HEK293 (cell line): ENCODE measurements at regions of chr6 and their contacts with region 1.

Region 1: DNA sequence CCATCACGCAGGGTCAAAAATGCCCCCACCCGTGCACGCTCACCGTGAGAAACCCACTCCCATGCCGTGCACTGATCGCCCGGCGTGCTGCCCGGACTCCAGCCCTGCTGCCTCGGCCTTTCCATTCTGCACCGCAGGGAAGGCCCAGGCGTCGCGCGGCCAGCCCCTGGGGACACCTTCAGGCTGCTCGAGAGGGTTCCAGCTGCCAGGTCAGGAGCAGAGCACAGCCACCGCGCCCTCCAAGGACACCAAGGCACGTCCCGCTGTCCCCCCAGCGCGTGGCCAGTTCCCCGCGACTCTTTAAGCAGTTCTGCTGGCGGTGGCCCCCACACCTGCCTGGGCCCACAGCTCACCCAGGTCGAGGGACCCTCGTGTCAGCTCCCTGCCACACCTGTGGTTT is 314.3 kb upstream of the QKI start:
- H3K4me3 ChIP-seq: no peak overlapping the region
- H3K27ac ChIP-seq: no peak overlapping the region
- H3K4me1 ChIP-seq: no peaks in the 10 kb centered on the region
- CTCF ChIP-seq: no peak

Region 2: DNA sequence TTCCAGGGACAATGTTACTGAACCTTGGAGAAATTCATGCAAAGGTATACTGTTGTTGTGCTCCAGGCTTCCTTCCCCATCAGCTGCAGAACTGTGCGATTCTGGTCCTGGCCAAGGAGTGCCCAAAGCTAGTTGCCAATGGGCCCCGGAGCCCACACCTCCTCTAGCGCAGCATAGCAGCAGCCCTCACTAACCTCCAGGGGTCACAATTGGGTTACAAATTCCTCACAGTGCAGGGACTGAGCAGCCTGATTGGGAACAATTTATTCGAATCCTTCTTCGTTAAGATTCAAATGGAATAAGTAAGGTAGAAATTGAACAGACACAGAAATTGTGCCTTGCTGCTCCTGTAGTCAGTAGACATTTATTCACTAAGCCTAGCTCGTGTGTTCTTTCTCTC is 657.6 kb before region 1 on chr6:
- CTCF ChIA-PET with region 1: interaction called, 13 read pairs
- POLR2A ChIA-PET with region 1: no interaction called
- H3K4me3 ChIP-seq: no peak overlapping the region
- H3K27ac ChIP-seq: no peak overlapping the region
- H3K4me1 ChIP-seq: no peaks in the 10 kb centered on the region
- CTCF ChIP-seq: 0 out of 2 replicates have a peak, but pooled peaks have one; percentile 18

Region 3: GRCh38 chr6:163113358-163113962 is 13.2 kb after region 1 on chr6:
- CTCF ChIA-PET with region 1: no interaction called
- POLR2A ChIA-PET with region 1: no interaction called
- H3K4me3 ChIP-seq: no peak overlapping the region
- H3K27ac ChIP-seq: no peak overlapping the region
- H3K4me1 ChIP-seq: no peaks in the 10 kb centered on the region
- CTCF ChIP-seq: no peak